T-cell (primary cell): ENCODE measurements at regions of chr7 and their contacts with region 1.

Region 1: DNA sequence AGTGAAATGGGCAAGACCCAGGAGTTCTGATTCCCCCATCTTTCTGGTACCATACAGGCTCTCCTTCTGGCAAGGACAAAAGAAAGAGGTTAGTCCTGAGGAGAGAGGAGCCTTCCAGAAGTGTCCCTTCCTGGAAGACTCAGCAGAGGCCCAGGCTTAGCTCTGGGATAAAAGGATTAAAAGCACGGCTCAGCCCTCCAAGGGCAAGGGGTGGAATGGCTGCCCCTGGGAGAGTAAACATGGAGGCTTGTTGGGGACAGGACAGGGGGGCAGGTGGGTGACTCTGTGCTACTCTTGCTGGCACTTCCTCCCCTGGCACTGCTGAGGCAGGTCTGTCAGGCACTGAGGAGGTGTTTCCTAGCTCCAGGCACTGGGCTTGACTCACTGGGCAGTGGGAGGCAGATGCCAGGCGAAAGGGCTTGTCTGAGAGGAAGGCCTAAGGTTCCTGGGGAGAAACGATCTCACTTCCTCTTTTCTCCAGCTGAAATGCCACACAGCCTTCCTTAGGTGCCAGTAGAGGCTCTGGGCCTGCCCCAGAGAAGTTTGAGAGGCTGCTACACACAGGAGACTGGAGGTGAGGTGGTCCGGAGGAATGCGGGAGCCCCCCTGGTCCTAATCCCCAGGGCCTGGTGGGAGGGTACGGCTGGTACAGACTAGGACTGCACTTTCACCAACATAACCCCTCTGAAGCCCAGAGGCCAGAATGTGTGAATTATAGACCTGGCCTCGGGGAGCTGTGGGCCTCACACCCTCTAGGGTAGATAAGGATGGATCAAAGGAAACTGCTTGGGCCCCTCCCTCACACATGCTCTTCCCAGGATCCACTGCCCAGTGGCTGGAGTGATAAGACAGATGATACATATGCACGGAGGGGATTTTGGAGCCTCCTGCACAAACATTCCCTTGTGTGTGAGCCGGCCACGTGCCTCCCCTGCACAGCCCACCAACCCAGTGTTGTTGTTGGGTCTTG is 63.2 kb upstream of the PODXL start:
- DNase-seq: no peak
- ATAC-seq: no peak
- H3K4me3 ChIP-seq: no peak overlapping the region
- H3K4me3 Mint-ChIP-seq: no peak overlapping the region
- H3K27ac ChIP-seq: no peak overlapping the region
- H3K27ac Mint-ChIP-seq: peak overlapping the region in 1 of 2 donors; percentile 39
- H3K4me1 ChIP-seq: no peaks in the 10 kb centered on the region
- H3K4me1 Mint-ChIP-seq: no peaks in the 10 kb centered on the region
- H3K27me3 ChIP-seq: peaks cover 0 to 15% of the 10 kb centered on the region in 2 experiments
- H3K27me3 Mint-ChIP-seq: peaks cover 9 to 14% of the 10 kb centered on the region in 2 donors

Region 2: GRCh38 chr7:130322587-130322986 is 1297.0 kb before region 1 on chr7:
- CTCF ChIA-PET with region 1: no interaction called
- POLR2A ChIA-PET with region 1: interaction called in 1 of 2 experiments, 11 read pairs
- DNase-seq: no peak
- ATAC-seq: no peak
- H3K4me3 ChIP-seq: no peak overlapping the region
- H3K4me3 Mint-ChIP-seq: no peak overlapping the region
- H3K27ac ChIP-seq: no peak overlapping the region
- H3K27ac Mint-ChIP-seq: no peak overlapping the region
- H3K4me1 ChIP-seq: no peaks in the 10 kb centered on the region
- H3K4me1 Mint-ChIP-seq: no peaks in the 10 kb centered on the region
- H3K27me3 ChIP-seq: no peaks in the 10 kb centered on the region
- H3K27me3 Mint-ChIP-seq: no peaks in the 10 kb centered on the region

Region 3: GRCh38 chr7:131603932-131604331 is 15.7 kb before region 1 on chr7:
- CTCF ChIA-PET with region 1: interaction called in 1 of 2 experiments, 3 read pairs
- POLR2A ChIA-PET with region 1: interaction called in 1 of 2 experiments, 13 read pairs
- DNase-seq: no peak
- ATAC-seq: no peak
- H3K4me3 ChIP-seq: no peak overlapping the region
- H3K4me3 Mint-ChIP-seq: no peak overlapping the region
- H3K27ac ChIP-seq: no peak overlapping the region
- H3K27ac Mint-ChIP-seq: no peak overlapping the region
- H3K4me1 ChIP-seq: no peaks in the 10 kb centered on the region
- H3K4me1 Mint-ChIP-seq: no peaks in the 10 kb centered on the region
- H3K27me3 ChIP-seq: peaks cover 6 to 43% of the 10 kb centered on the region in 2 experiments
- H3K27me3 Mint-ChIP-seq: peaks cover 13 to 47% of the 10 kb centered on the region in 2 donors

Region 4: DNA sequence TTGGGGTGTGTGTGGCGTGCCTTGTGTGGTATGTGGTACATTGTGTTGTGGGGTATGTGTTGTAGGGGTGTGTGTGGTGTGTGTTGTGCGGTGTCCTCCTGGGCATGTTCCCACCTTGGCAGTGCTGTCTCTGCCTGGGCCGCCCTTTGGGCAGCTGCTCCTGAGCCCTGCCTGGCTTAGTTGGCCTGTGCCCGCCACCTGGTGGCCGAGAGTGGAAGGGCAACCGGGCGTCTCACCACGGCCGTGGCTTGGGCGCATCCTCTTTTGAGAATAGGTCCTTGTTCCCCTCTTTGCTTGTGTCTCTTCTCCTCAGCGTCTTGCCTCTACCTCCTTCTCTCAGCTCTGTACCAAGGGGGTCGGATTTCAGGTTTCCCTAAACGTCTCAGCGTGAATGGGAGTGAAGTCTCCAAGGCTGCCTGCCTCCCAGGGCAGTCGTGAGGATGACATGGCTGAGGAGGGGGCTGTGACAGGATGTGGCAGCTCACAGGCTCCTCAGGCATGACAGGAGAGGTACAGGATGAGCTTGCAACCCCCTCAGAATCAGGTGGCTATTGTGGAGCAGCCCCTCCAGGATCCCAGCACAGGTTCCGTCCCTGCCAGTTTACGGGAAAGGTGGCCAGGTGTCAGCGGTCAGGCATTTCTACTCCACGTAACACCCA is 35.2 kb after region 1 on chr7:
- CTCF ChIA-PET with region 1: no interaction called
- POLR2A ChIA-PET with region 1: no interaction called
- DNase-seq: peak; percentile 38 to 84 (median 71)
- ATAC-seq: peak; percentile 71 to 92 (median 78)
- H3K4me3 ChIP-seq: no peak overlapping the region
- H3K4me3 Mint-ChIP-seq: no peak overlapping the region
- H3K27ac ChIP-seq: no peak overlapping the region
- H3K27ac Mint-ChIP-seq: no peak overlapping the region
- H3K4me1 ChIP-seq: peaks cover 0 to 5% of the 10 kb centered on the region in 2 experiments
- H3K4me1 Mint-ChIP-seq: peaks cover 0 to 2% (median 0%) of the 10 kb centered on the region in 3 donors
- H3K27me3 ChIP-seq: peaks cover 0 to 20% of the 10 kb centered on the region in 2 experiments
- H3K27me3 Mint-ChIP-seq: peaks cover 3 to 9% of the 10 kb centered on the region in 2 donors

Region 5: GRCh38 chr7:131688738-131689661 is 69.4 kb after region 1 on chr7:
- CTCF ChIA-PET with region 1: no interaction called
- POLR2A ChIA-PET with region 1: no interaction called
- DNase-seq: peak in 31 of 35 experiments; percentile 10 to 64 (median 38)
- ATAC-seq: peak in 3 of 4 experiments; percentile 48 to 68 (median 66)
- H3K4me3 ChIP-seq: no peak overlapping the region
- H3K4me3 Mint-ChIP-seq: no peak overlapping the region
- H3K27ac ChIP-seq: no peak overlapping the region
- H3K27ac Mint-ChIP-seq: no peak overlapping the region
- H3K4me1 ChIP-seq: peaks cover 0 to 10% of the 10 kb centered on the region in 2 experiments
- H3K4me1 Mint-ChIP-seq: peaks cover 3 to 6% (median 4%) of the 10 kb centered on the region in 3 donors
- H3K27me3 ChIP-seq: peaks cover 0 to 73% of the 10 kb centered on the region in 2 experiments
- H3K27me3 Mint-ChIP-seq: peaks cover 44 to 64% of the 10 kb centered on the region in 2 donors